ENCODE measurements at regions of chr1 and their contacts with region 1.

Region 1: DNA sequence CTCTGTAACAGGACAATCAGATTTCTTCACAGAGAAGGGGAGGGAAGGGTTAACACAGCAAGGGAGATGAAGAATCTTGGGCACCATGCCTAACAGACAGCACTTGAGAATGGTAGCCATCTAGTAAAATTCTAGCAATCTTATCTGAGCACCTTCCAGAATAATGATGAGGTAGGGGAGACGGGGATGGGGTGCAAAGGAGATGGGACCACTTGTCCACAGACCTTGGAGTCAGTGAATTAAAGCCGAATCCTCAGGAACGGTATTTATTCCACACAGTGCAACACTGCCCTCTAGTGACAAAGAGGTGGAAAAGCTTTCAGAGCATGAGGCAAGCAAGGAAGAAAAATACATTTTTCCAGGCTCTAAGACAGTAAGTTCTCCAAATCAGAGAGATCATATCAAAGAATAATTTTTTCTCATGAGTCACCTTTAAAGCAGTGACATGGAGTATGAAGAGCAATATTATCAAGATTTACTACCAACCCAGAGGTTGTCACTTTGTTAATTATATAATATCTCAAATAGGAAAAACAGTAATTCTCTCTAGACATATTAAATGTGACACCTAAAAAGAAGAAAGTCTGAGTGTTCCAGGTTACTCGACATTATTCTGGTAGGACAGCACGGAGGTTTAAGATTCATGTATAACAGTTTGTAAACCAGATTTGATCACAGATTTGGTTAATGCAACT is 43.3 kb upstream of the LPAR3 start:
- DNase-seq: peak; percentile 81
- ATAC-seq: peak; percentile 55
- H3K4me3 ChIP-seq: no peak overlapping the region
- H3K27ac ChIP-seq: 0 out of 2 replicates have a peak overlapping the region, but pooled peaks have one; percentile 4
- H3K4me1 ChIP-seq: peaks cover 32% of the 10 kb centered on the region
- H3K27me3 ChIP-seq: no peaks in the 10 kb centered on the region
- CTCF ChIP-seq: peak; percentile 95

Region 2: GRCh38 chr1:84541679-84542078 is 394.6 kb before region 1 on chr1:
- CTCF ChIA-PET with region 1: no interaction called
- POLR2A ChIA-PET with region 1: no interaction called
- intact Hi-C with region 1: loop called (anchors 10 kb)
- DNase-seq: peak; percentile 14
- ATAC-seq: no peak
- H3K4me3 ChIP-seq: no peak overlapping the region
- H3K27ac ChIP-seq: no peak overlapping the region
- H3K4me1 ChIP-seq: peaks cover 16% of the 10 kb centered on the region
- H3K27me3 ChIP-seq: no peaks in the 10 kb centered on the region
- CTCF ChIP-seq: peak; percentile 65

Region 3: GRCh38 chr1:84653130-84653677 is 283.1 kb before region 1 on chr1:
- CTCF ChIA-PET with region 1: no interaction called
- POLR2A ChIA-PET with region 1: no interaction called
- intact Hi-C with region 1: loop called (anchors 1 kb)
- DNase-seq: peak; percentile 47
- ATAC-seq: peak; percentile 67; the same call in 1 of the 2 replicates
- H3K4me3 ChIP-seq: no peak overlapping the region
- H3K27ac ChIP-seq: no peak overlapping the region
- H3K4me1 ChIP-seq: 0 out of 2 replicates have a peak, but pooled peaks cover 5% of the 10 kb centered on the region
- H3K27me3 ChIP-seq: no peaks in the 10 kb centered on the region
- CTCF ChIP-seq: peak; percentile 47

Region 4: DNA sequence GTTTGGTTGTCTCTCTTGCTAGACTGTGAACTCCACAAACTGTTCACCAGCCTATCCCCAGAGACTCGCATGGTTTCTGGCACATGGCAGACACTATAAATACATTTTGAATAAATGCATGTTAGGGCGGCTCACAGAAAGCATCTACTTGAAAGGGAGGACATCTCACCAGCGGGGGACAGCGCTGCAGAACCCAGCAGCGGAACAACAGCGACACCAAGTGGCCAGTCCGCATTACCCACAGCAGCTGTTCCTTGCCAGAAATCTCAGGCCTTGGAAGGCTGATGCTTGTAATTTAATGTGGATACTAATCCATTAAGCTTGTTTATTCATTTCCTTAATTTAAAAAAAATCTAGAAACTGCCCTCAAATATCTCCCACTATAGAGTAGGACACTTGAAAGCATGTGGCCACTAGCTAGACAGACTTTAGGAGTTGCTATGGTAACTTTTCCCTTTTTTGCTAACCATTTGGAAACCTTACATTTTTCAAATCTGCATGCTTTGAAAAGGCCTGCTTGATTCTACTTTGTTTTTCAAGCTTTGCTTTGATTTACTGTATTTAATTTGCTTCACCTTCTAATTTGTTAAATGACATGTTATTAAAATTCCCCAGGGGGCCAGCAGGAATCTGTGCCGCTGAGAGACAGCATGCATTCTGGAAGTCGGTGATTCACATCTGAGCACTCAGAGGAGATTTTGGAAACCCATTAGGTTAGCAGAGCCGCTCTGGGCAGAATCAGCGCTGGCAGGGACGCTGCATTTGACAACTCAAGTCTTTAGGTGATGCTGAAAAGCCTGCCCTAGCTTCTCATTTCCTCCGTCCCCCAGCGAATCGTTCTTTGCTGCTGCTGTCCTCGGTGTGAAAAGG is 182.5 kb before region 1 on chr1:
- CTCF ChIA-PET with region 1: interaction called, 3 read pairs
- POLR2A ChIA-PET with region 1: no interaction called
- intact Hi-C with region 1: loop called (anchors 1 kb)
- DNase-seq: peak; percentile 82
- ATAC-seq: peak; percentile 89
- H3K4me3 ChIP-seq: no peak overlapping the region
- H3K27ac ChIP-seq: no peak overlapping the region
- H3K4me1 ChIP-seq: 0 out of 2 replicates have a peak, but pooled peaks cover 4% of the 10 kb centered on the region
- H3K27me3 ChIP-seq: no peaks in the 10 kb centered on the region
- CTCF ChIP-seq: peak; percentile 97

Region 5: DNA sequence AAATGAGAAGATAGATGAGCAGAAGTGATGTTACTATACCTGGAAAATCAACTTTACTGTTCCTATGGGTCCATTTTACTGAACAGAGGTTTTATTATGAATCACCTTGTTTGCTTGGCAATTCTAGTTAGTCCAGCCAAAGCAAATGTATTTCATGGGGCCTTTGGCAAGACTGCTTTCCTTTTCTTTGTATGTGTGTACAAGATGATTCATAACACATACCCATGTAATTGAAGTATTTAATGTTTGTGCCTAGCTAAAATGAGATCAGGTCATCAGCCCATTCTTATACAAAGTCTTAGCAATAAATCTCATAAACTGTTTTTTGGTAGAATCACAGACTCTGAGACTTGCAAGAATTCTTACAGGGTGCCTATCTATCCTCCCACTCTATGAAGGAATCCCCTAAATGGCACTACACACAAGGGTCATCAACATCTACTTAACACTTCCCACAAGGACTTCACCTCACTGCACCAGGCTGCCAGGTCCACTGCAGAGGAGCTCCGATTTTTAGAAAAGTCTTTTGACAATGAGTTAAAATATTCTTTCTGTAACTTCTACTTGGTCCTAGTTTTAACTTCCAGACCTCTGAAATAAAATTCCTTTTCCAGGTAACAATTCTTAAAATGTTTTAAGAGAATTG is 101.7 kb before region 1 on chr1:
- CTCF ChIA-PET with region 1: no interaction called
- POLR2A ChIA-PET with region 1: no interaction called
- intact Hi-C with region 1: loop called (anchors 1 kb)
- DNase-seq: peak; percentile 95
- ATAC-seq: peak; percentile 64
- H3K4me3 ChIP-seq: peak overlapping the region; percentile 14; the same call in 1 of the 2 replicates
- H3K27ac ChIP-seq: peak overlapping the region; percentile 97
- H3K4me1 ChIP-seq: peaks cover 54% of the 10 kb centered on the region
- H3K27me3 ChIP-seq: no peaks in the 10 kb centered on the region
- CTCF ChIP-seq: no peak

Region 6: DNA sequence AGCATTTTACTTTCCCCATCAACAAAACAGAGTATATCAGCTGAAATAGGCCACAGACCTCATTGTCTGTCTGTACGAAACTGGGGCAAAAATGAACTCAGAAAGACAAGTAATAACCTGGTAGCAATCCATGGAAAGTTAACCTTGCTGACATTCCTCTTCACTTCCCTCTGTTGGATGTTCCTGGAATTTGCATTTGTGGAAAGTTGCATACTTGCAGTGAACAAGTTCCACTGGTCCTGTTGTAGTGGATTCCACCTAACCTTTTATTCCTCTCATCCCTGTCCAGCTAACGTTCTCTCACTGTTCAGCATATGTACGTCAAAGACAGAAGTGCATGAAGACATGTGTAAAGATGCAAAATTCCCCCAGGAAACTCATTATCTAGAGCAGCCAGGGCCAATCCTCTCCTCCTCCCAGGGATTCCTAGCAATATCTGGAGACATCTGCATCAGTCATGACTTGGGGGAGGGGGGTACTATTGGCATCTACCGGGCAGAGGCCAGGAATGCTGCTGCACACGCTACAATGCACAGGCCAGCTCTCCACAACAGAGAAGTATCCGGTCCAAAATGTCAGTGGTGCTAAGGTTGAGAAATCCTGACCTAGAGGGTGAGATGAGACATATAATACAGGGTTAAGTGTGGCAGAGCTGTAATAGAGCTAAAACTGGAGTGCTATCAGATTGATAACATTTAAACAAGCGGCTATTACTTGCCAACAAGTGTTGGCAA is 51.4 kb before region 1 on chr1:
- CTCF ChIA-PET with region 1: no interaction called
- POLR2A ChIA-PET with region 1: no interaction called
- intact Hi-C with region 1: loop called (anchors 5 kb)
- DNase-seq: peak; percentile 32
- ATAC-seq: no peak
- H3K4me3 ChIP-seq: no peak overlapping the region
- H3K27ac ChIP-seq: no peak overlapping the region
- H3K4me1 ChIP-seq: peaks cover 38% of the 10 kb centered on the region
- H3K27me3 ChIP-seq: no peaks in the 10 kb centered on the region
- CTCF ChIP-seq: peak; percentile 34